ENCODE measurements at regions of chr19 and their contacts with region 1.

Region 1: DNA sequence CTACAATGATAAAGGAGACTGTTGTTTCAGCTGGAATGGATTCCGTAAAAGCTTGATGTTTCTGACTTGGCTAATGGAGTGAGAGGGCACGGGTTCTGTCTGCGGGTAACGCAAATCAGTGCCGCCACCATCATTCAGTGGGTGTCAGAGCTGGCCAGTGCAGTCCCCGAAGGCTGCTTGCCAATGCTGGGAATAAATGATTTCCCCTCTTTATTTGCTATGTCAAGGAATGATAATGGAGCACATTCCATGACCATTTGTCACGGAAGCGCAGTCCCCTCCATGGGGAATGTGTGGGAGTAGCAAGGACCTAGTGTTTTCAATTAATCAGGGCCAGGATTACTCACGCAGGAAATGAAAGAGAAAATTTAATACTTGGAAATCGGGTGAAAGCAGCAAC is 899.3 kb downstream of the UQCRFS1 start:
- DNase-seq: peak in 1 of 2 donors; percentile 21
- ATAC-seq: peak in 1 of 4 donors; percentile 76
- H3K4me3 ChIP-seq: no peak overlapping the region
- H3K27ac ChIP-seq: no peak overlapping the region
- H3K4me1 ChIP-seq: no peaks in the 10 kb centered on the region
- H3K27me3 ChIP-seq: peaks cover 0 to 10% (median 3%) of the 10 kb centered on the region in 3 donors
- CTCF ChIP-seq: no peak

Region 2: DNA sequence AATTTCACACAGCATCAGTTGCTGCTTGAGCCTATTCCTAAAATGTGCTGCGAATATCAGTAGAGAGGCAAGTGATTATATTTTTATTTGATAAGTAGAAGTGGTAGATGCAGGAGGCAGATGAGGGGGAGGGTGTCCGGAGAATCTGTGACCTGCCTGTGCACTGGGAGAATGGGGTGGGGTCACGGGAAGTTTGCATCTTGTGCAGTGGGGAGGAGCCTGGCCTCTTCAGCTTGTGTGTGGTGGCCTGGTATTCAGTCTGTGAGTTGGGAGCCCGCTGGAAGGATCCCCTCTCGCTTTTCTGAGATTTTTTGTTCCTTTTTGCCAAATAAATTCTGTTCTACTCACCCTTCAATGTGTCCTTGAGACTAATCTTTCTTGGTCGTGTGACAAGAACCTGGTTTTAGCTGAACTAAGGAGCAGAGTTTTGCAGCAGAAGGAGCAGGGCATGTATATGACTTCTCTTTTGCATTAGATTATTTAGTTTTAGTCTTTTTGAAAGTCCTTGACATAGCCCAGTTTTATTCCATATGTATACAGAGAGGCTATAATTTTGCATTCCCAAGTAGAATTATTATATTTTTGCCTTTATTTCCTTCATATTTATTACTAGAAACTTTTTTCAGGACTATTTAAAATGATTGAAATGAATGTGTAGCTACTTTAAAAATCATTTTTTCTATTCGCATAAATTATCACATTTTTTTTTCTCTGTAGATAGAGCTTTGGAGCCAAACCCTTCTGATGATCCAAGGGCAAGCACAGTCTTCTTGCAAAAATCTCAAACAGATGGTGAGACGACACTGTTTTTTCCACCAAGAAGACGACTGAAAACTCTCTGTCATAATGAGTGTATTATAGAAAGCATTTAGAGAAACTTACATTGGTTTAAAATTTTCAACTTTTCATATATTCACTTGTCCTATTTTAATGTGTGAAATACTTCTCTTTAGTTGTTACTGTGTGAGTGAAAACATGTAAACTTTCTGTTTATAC is 357.9 kb before region 1 on chr19:
- intact Hi-C with region 1: no loop called
- DNase-seq: no peak
- ATAC-seq: no peak
- H3K4me3 ChIP-seq: no peak overlapping the region
- H3K27ac ChIP-seq: no peak overlapping the region
- H3K4me1 ChIP-seq: no peaks in the 10 kb centered on the region
- H3K27me3 ChIP-seq: no peaks in the 10 kb centered on the region
- CTCF ChIP-seq: no peak

Region 3: GRCh38 chr19:28224441-28224840 is 89.2 kb before region 1 on chr19:
- intact Hi-C with region 1: no loop called
- DNase-seq: no peak
- ATAC-seq: no peak
- H3K4me3 ChIP-seq: no peak overlapping the region
- H3K27ac ChIP-seq: no peak overlapping the region
- H3K4me1 ChIP-seq: no peaks in the 10 kb centered on the region
- H3K27me3 ChIP-seq: no peaks in the 10 kb centered on the region
- CTCF ChIP-seq: no peak

Region 4: DNA sequence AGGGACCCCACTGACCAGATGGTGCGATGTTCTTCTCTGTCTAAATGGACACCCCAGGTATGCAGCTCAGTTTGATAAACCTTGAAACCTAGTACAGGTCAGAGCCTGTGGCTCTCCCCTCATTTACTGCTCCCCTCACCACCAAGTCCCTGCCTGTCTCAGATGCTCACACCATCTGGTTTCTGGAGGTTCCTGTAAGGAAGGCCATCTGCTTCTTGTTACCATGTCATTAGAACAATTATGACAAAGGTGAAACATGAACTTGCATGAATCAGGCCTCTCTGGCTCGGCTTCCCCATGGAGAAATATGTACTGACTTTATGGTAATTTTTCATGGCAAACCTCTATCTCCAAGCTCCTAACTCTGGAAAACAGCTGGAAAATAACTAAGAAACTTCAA is 66.4 kb before region 1 on chr19:
- intact Hi-C with region 1: loop called in 1 of 2 experiments (anchors 2 kb)
- DNase-seq: no peak
- ATAC-seq: no peak
- H3K4me3 ChIP-seq: no peak overlapping the region
- H3K27ac ChIP-seq: no peak overlapping the region
- H3K4me1 ChIP-seq: no peaks in the 10 kb centered on the region
- H3K27me3 ChIP-seq: no peaks in the 10 kb centered on the region
- CTCF ChIP-seq: no peak